Activated naive CD4-positive, alpha-beta T cell treated with anti-CD3 and anti-CD28 coated beads for 36 hours (primary cell): ENCODE measurements at regions of chr22 and their contacts with region 1.

Region 1: GRCh38 chr22:36365020-36365411 is 22.8 kb downstream of the MYH9 start:
- DNase-seq: peak; percentile 98
- H3K4me3 Mint-ChIP-seq: peak overlapping the region; percentile 53
- H3K27ac Mint-ChIP-seq: peak overlapping the region; percentile 96
- H3K4me1 Mint-ChIP-seq: peaks cover 99% of the 10 kb centered on the region
- H3K27me3 Mint-ChIP-seq: no peaks in the 10 kb centered on the region

Region 2: GRCh38 chr22:36239401-36240171 is 125.4 kb before region 1 on chr22 and contains the start of gene APOL2:
- CTCF ChIA-PET with region 1: no interaction called
- intact Hi-C with region 1: loop called (anchors 5 kb)
- DNase-seq: peak; percentile 94
- H3K4me3 Mint-ChIP-seq: peak within 1 kb of the TSS; percentile 98
- H3K27ac Mint-ChIP-seq: peak within 1 kb of the TSS; percentile 99
- H3K4me1 Mint-ChIP-seq: peaks cover 44% of the 10 kb centered on the region
- H3K27me3 Mint-ChIP-seq: no peaks in the 10 kb centered on the region
- total RNA-seq, gene APOL2: 53.8 to 55.0 TPM

Region 3: DNA sequence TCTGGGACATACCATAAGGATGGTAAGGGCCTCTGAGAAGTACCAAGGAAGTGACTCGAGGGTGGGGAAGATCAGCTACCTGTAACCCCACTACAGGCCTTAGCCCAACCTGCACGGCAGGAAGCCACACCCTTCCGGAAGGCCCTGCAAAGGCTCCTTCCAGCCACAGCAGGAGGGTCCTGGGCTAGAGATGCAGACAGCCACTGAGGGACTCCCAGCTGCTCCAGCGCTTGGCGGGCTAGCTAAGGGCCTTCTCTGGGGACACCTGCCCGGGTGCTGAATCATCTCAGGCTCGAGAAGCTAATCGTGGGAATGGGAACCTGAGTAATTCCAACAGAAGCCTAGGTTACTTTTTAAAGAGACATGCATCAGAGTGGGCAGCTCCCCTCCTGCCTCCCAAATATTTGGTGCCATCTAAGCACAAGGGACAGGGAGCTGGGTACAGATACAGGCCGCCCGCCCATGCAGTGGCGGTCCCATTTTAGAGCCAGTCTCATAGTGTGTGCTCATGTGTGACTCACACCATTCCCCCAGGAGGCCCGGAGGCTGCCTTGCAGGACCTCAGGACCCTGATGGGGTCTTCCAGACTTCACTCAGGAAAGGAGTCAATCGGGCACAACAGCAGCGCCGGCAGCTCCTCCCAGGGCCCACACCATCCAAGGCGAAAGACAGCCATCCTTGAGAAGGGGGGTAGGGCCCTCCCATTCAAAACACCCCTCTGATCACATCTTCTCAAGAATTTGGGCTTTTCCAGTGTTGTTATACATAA is 14.8 kb after region 1 on chr22:
- CTCF ChIA-PET with region 1: interaction called, 11 read pairs
- intact Hi-C with region 1: loop called (anchors 1 kb)
- DNase-seq: peak; percentile 61
- H3K4me3 Mint-ChIP-seq: peak overlapping the region; percentile 79
- H3K27ac Mint-ChIP-seq: peak overlapping the region; percentile 100
- H3K4me1 Mint-ChIP-seq: peaks cover 93% of the 10 kb centered on the region
- H3K27me3 Mint-ChIP-seq: no peaks in the 10 kb centered on the region

Region 4: GRCh38 chr22:36405671-36406538 is 40.9 kb after region 1 on chr22:
- CTCF ChIA-PET with region 1: no interaction called
- intact Hi-C with region 1: loop called (anchors 2 kb)
- DNase-seq: peak; percentile 67
- H3K4me3 Mint-ChIP-seq: no peak overlapping the region
- H3K27ac Mint-ChIP-seq: peak overlapping the region; percentile 76
- H3K4me1 Mint-ChIP-seq: peaks cover 38% of the 10 kb centered on the region
- H3K27me3 Mint-ChIP-seq: no peaks in the 10 kb centered on the region

Region 5: DNA sequence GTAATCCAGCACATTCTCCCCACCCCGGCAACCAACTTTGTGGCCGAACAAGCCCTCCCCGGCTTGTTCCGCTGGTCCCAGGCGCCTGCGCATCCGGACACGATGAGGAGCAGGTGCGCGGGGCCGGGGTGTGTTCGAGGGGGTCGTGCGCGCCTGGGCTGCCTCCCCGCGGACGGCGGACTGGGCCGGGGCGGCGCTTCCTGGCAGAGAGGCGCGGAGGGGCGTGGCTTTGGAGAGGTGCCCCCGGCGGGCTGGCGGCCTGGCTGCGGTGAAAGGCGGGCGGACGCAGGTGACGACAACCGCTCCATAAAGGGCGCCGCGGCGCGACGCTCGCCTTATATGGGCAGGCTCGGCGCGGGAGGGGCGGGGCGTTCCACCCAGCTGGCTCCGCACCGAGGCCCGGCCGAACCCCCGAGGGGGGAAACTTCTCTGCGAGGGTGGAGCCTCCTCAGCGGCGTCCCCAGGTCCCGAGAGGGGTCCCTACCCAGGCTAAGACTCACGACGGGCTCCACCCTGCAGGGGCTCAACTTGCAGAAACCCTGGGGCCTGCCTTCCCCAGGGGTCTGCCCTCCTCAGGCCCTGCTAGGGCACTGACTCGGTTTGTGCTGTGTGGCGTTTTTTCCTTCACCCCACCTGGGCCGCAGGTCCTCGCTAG is 90.0 kb after region 1 on chr22:
- CTCF ChIA-PET with region 1: interaction called, 3 read pairs
- intact Hi-C with region 1: loop called (anchors 1 kb)
- DNase-seq: peak; percentile 96
- H3K4me3 Mint-ChIP-seq: peak overlapping the region; percentile 76
- H3K27ac Mint-ChIP-seq: peak overlapping the region; percentile 75
- H3K4me1 Mint-ChIP-seq: peaks cover 37% of the 10 kb centered on the region
- H3K27me3 Mint-ChIP-seq: no peaks in the 10 kb centered on the region

Region 6: GRCh38 chr22:37599153-37599552 is 1234.1 kb after region 1 on chr22:
- CTCF ChIA-PET with region 1: no interaction called
- intact Hi-C with region 1: no loop called
- DNase-seq: no peak
- H3K4me3 Mint-ChIP-seq: no peak overlapping the region
- H3K27ac Mint-ChIP-seq: no peak overlapping the region
- H3K4me1 Mint-ChIP-seq: peaks cover 11% of the 10 kb centered on the region
- H3K27me3 Mint-ChIP-seq: no peaks in the 10 kb centered on the region